Heart right ventricle (tissue), 16 donors: ENCODE measurements at regions of chr7 and their contacts with region 1.

Region 1: DNA sequence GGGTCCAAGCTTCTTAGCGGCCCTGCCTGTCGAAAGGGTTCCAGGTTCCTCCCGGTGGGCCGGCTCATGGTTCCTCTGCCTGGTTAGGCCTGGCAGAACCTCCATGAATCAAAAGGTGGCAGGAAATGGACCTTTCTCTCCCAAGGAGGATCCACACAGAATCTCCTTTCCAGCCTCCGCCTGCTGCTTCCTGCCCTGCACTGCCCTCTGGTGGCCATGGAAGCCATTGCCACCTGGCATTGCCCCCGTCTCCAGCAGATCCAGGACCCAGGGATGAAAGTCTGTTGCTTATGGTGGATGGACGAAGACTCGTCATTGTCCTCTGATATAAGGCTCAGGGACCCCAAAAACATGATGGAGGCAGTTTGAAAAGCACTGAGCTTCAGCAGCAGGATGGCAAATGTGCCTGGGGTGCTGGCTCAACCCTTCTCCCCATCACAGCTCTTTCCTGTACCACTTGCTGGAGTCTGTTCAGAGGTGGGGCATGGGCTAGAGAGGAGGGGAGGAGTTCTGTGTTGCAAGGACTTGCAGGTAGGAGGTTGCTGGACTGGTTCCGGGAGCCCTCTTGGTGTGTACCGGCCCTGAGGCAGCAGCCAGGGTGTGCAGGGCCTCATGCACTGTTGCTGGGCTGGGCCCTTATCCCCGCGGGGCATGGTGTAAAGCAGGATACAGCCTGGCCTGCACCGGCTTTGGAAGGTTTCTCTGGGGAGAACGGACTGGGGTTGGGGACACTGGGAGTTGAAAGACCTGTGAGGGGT is 11.3 kb upstream of the INMT start:
- DNase-seq: peak; percentile 76 to 82
- ATAC-seq: peak; percentile 55 to 88 (median 73)
- H3K4me3 ChIP-seq: no peak overlapping the region
- H3K27ac ChIP-seq: no peak overlapping the region
- H3K4me1 ChIP-seq: peaks cover 0 to 24% (median 5%) of the 10 kb centered on the region in 9 donors
- H3K27me3 ChIP-seq: no peaks in the 10 kb centered on the region
- CTCF ChIP-seq: peak; percentile 96 to 100 (median 99)

Region 2: GRCh38 chr7:30625283-30625682 is 115.3 kb before region 1 on chr7:
- intact Hi-C with region 1: loop called in 9 of 10 experiments (anchors 2 to 10 kb)
- DNase-seq: no peak
- ATAC-seq: no peak
- H3K4me3 ChIP-seq: no peak overlapping the region
- H3K27ac ChIP-seq: no peak overlapping the region
- H3K4me1 ChIP-seq: no peaks in the 10 kb centered on the region
- H3K27me3 ChIP-seq: no peaks in the 10 kb centered on the region
- CTCF ChIP-seq: peak in 7 of 9 donors; percentile 20 to 50 (median 30)

Region 3: DNA sequence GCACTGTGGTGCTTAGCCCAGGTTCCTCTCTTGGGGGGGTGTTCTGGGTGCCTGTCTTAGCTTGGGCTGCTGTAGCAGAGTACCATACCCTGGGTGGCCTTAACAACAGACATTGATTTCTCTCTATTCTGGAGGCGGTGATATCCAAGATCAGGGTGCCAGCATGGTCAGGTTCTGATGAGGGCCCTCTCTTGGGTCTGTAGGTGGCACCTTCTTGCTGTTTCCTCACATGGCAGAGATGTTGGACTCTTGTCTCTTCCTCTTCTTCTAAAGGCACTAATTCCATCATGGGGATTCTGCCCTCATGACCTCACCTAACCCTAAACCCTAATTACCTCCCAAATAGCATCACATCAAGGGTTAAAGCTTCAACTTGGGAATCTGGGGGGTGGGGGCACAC is 38.4 kb before region 1 on chr7:
- intact Hi-C with region 1: loop called in 1 of 10 experiments (anchors 5 kb)
- DNase-seq: no peak
- ATAC-seq: no peak
- H3K4me3 ChIP-seq: no peak overlapping the region
- H3K27ac ChIP-seq: no peak overlapping the region
- H3K4me1 ChIP-seq: peaks cover under 1 to 39% (median 12%) of the 10 kb centered on the region in 9 donors
- H3K27me3 ChIP-seq: no peaks in the 10 kb centered on the region
- CTCF ChIP-seq: peak in 3 of 9 donors; percentile 10 to 21 (median 18)

Region 4: DNA sequence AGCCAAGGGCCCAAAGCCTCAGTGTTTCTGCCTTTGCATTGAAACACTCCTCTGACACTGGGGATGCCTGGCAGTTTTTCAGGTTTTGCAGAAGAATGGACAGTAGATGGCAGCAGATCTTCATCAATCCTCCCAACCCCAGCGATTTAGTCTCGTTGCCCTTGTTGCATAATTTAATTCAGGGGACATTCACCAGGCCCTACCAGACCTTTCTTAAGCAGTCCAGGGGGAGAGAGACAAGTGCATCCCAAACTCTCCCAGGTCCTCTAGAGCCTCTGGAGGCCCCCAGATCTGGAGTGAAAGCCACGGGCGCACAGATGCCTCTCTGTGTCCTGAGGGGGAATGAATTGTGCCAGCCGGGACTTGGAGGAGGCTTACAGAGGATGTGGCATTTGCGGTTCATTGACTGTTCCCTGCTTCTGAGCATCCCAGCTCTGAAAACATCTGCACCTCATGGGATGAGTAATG is 60.2 kb after region 1 on chr7:
- intact Hi-C with region 1: loop called in 3 of 10 experiments (anchors 5 to 10 kb)
- DNase-seq: peak in 1 of 2 donors; percentile 70
- ATAC-seq: peak; percentile 49 to 82 (median 76)
- H3K4me3 ChIP-seq: no peak overlapping the region
- H3K27ac ChIP-seq: peak overlapping the region in 7 of 10 donors; percentile 4 to 69 (median 26)
- H3K4me1 ChIP-seq: peaks cover 3 to 79% (median 61%) of the 10 kb centered on the region in 9 donors
- H3K27me3 ChIP-seq: no peaks in the 10 kb centered on the region
- CTCF ChIP-seq: peak; percentile 39 to 87 (median 75)

Region 5: GRCh38 chr7:30831227-30831626 is 90.6 kb after region 1 on chr7:
- intact Hi-C with region 1: no loop called
- DNase-seq: no peak
- ATAC-seq: no peak
- H3K4me3 ChIP-seq: no peak overlapping the region
- H3K27ac ChIP-seq: no peak overlapping the region
- H3K4me1 ChIP-seq: no peaks in the 10 kb centered on the region
- H3K27me3 ChIP-seq: no peaks in the 10 kb centered on the region
- CTCF ChIP-seq: no peak

Region 6: DNA sequence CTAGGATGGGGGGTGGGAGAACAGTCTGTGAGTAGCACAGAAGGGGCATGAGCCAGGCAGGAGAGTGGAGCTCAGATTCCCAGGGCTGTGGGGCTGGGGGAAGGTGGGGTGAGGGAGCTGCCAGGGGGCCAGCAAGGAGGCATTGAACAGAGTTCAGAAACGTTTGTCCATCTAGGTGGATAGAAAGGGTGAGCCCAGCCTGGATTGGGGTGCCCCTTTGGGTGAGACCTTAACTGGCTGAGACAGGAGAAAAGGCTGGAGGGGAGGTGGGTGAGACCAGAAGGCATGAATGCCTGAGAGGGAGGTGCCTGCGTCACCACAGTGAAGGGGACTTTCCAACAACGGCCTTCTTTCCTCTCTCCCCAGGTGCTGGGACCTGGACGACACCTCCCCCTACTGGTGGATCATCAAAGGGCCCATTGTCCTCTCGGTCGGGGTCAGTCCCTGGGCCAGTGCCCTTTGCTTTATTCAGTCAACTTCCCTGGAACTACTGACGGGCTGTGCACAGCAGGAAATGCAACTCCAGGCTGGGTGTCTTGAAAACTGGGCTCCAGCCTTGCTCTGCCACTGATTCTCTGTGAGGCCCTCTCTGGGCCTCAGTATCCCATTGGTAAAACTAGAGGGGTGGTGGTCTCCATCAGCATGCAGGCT is 234.1 kb after region 1 on chr7:
- intact Hi-C with region 1: loop called in 8 of 10 experiments (anchors 5 kb)
- DNase-seq: peak; percentile 48 to 69
- ATAC-seq: peak; percentile 69 to 89 (median 79)
- H3K4me3 ChIP-seq: no peak overlapping the region
- H3K27ac ChIP-seq: no peak overlapping the region
- H3K4me1 ChIP-seq: peaks cover 0 to 16% (median 7%) of the 10 kb centered on the region in 9 donors
- H3K27me3 ChIP-seq: peaks cover 0 to 36% (median 0%) of the 10 kb centered on the region in 7 donors
- CTCF ChIP-seq: peak; percentile 66 to 86 (median 79)